Right cardiac atrium (tissue), 5 donors: ENCODE measurements at regions of chr5 and their contacts with region 1.

Region 1: GRCh38 chr5:22258139-22258538 is 595.0 kb downstream of the CDH12 start:
- DNase-seq: no peak
- ATAC-seq: no peak
- H3K4me3 ChIP-seq: no peak overlapping the region
- H3K27ac ChIP-seq: no peak overlapping the region
- H3K4me1 ChIP-seq: no peaks in the 10 kb centered on the region
- H3K27me3 ChIP-seq: no peaks in the 10 kb centered on the region

Region 2: DNA sequence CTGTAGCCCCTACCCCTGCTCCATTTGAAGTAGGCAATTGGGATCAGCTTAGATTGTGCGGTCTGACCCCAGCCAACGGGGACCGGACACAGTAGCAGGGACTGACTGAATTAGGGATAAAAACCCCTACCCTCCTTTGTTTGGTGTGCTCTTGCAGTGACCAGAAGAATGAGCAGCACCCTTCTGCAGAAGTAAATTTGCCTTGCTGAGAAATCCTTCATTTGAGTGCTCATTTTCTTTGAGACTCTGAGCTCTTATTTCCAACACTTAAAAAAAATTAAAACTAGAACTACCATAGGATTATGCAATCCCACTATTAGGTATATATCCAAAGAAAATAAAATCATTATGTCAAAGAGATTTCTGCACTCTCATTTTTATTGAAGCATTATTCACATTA is 35.0 kb after region 1 on chr5:
- intact Hi-C with region 1: loop called in 1 of 4 experiments (anchors 2 kb)
- DNase-seq: no peak
- ATAC-seq: no peak
- H3K4me3 ChIP-seq: no peak overlapping the region
- H3K27ac ChIP-seq: no peak overlapping the region
- H3K4me1 ChIP-seq: no peaks in the 10 kb centered on the region
- H3K27me3 ChIP-seq: no peaks in the 10 kb centered on the region

Region 3: DNA sequence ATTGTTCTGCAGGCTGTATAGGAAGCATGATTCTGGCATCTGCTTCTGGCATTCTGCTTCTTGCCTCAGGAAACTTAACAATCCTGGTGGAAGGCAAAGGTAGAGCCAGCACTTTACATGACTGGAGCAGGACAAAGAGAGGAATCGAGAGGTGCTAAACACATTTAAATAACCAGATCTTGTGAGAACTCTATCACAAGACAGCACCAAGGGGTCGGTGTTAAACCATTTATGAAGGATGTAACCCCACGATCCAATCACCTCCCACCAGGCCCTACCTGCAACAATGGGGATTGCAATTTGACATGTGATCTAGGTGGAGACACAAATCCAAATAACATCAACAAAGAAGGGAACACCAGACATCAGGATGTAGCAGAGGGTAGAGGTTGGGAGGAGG is 373.5 kb after region 1 on chr5:
- intact Hi-C with region 1: no loop called
- DNase-seq: no peak
- ATAC-seq: no peak
- H3K4me3 ChIP-seq: no peak overlapping the region
- H3K27ac ChIP-seq: no peak overlapping the region
- H3K4me1 ChIP-seq: no peaks in the 10 kb centered on the region
- H3K27me3 ChIP-seq: no peaks in the 10 kb centered on the region